MCF 10A (cell line): ENCODE measurements at regions of chr5 and their contacts with region 1.

Region 1: DNA sequence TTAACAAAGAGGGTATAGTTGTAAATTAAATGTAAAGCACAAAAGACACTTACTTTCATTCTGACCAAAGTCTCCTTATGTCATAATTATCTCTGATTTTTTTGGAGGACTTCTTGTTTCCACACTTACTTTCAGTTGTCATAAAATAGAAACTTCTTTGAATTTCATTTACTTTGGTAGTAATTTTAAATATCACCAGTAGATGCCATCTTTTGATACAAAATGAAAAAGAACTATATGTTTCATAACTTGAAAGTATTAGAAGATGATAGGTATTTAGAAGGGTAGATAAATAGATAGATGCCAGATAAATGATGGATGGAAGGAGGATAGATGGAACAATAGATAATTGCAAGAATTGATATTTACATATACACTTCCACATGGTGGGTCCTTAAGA is 1865.3 kb upstream of the CDH9 start:
- DNase-seq: no peak
- H3K4me3 Mint-ChIP-seq: no peak overlapping the region
- H3K27ac Mint-ChIP-seq: no peak overlapping the region
- H3K4me1 Mint-ChIP-seq: peaks cover 6% of the 10 kb centered on the region
- H3K27me3 Mint-ChIP-seq: no peaks in the 10 kb centered on the region
- CTCF ChIP-seq: peak; percentile 25

Region 2: GRCh38 chr5:28945859-28946258 is 42.2 kb after region 1 on chr5:
- CTCF ChIA-PET with region 1: no interaction called
- POLR2A ChIA-PET with region 1: no interaction called
- intact Hi-C with region 1: no loop called
- DNase-seq: no peak
- H3K4me3 Mint-ChIP-seq: no peak overlapping the region
- H3K27ac Mint-ChIP-seq: no peak overlapping the region
- H3K4me1 Mint-ChIP-seq: no peaks in the 10 kb centered on the region
- H3K27me3 Mint-ChIP-seq: no peaks in the 10 kb centered on the region
- CTCF ChIP-seq: no peak

Region 3: DNA sequence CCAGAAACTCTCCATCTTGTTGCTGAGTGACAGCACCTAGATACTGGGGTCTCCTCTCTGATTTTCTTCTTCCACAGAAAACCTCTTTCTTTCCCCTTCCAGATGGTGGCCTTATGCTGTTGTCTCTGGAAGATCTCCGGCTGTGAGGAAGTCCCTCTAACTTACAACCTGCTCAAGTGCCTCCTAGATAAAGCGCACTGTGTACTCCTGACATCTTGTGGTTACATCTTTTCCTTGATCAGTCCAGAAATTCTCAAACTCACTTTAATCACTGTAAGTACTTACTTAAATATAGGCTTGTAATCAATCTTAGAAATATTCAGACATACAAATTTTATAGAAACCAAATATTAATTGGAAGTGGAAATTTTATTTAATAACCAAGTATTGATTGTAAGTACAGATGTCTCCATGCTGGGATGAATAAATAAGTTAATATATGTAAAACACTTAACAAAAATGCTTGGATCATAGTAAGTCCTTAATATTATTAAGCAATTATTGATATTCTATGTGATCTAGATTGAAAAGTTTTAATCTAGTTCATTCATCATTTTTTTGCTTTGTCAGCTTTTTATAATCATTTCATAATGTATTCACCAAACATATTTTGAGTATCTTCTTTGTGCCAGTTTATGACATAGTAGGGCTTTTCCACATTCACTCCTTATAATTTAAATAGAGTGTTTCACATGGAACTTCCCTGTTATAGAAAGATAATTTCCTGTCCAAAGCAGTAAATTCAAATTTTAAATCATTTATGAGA is 908.5 kb after region 1 on chr5:
- CTCF ChIA-PET with region 1: no interaction called
- POLR2A ChIA-PET with region 1: no interaction called
- intact Hi-C with region 1: loop called (anchors 5 kb)
- DNase-seq: peak; percentile 21
- H3K4me3 Mint-ChIP-seq: no peak overlapping the region
- H3K27ac Mint-ChIP-seq: no peak overlapping the region
- H3K4me1 Mint-ChIP-seq: peaks cover 6% of the 10 kb centered on the region
- H3K27me3 Mint-ChIP-seq: no peaks in the 10 kb centered on the region
- CTCF ChIP-seq: no peak